ENCODE measurements at regions of chr3 and their contacts with region 1.

Region 1: GRCh38 chr3:49899815-49900214 is 3.9 kb downstream of the MST1R start:
- DNase-seq: no peak
- ATAC-seq: no peak
- H3K4me3 ChIP-seq: peak overlapping the region; percentile 31 to 62; a peak in 3 of 4 replicates
- H3K27ac ChIP-seq: peak overlapping the region; percentile 94
- H3K4me1 ChIP-seq: peaks cover 20% of the 10 kb centered on the region
- H3K27me3 ChIP-seq: no peaks in the 10 kb centered on the region
- CTCF ChIP-seq: peak; percentile 61; the same call in 1 of the 2 replicates

Region 2: GRCh38 chr3:49841126-49841696 is 58.6 kb before region 1 on chr3:
- CTCF ChIA-PET with region 1: no interaction called
- POLR2A ChIA-PET with region 1: no interaction called
- in situ Hi-C with region 1: no loop called
- intact Hi-C with region 1: no loop called
- DNase-seq: peak; percentile 24
- ATAC-seq: peak; percentile 72
- H3K4me3 ChIP-seq: no peak overlapping the region
- H3K27ac ChIP-seq: no peak overlapping the region
- H3K4me1 ChIP-seq: no peaks in the 10 kb centered on the region
- H3K27me3 ChIP-seq: no peaks in the 10 kb centered on the region
- CTCF ChIP-seq: peak; percentile 71; the same call in 1 of the 2 replicates

Region 3: DNA sequence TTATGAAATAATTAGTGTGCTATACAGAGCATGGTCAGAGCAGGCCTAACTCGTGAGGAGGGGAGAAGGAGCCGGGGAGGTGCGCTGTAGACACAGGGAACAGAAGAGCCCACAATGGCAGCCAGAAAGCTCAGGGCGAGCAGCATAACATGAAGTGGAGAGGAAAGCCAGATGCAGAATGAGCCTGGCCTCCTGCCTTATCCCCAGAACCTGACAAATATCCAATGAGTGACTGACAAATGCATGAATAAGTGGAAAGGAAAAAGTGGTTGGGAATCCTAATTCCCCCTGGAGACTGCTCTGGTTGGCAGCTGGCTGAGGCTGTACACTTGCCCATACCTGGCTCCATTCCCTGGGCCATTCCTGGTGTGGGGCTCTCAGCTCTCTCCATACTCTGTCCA is 13.1 kb after region 1 on chr3:
- CTCF ChIA-PET with region 1: interaction called, 10 read pairs
- POLR2A ChIA-PET with region 1: no interaction called
- in situ Hi-C with region 1: no loop called
- intact Hi-C with region 1: no loop called
- DNase-seq: no peak
- ATAC-seq: no peak
- H3K4me3 ChIP-seq: no peak overlapping the region
- H3K27ac ChIP-seq: no peak overlapping the region
- H3K4me1 ChIP-seq: no peaks in the 10 kb centered on the region
- H3K27me3 ChIP-seq: no peaks in the 10 kb centered on the region
- CTCF ChIP-seq: no peak

Measured in Panc1 (cell line).